PC-9 (cell line): ENCODE measurements at regions of chr6 and their contacts with region 1.

Region 1: GRCh38 chr6:158869826-158870648 is 50.9 kb upstream of the EZR start:
- DNase-seq: peak; percentile 87 to 99
- H3K4me3 ChIP-seq: peak overlapping the region; percentile 52
- H3K27ac ChIP-seq: peak overlapping the region; percentile 98
- H3K4me1 ChIP-seq: peaks cover 48% of the 10 kb centered on the region
- H3K27me3 ChIP-seq: no peaks in the 10 kb centered on the region
- CTCF ChIP-seq: peak; percentile 33; the same call in 1 of the 2 replicates

Region 2: DNA sequence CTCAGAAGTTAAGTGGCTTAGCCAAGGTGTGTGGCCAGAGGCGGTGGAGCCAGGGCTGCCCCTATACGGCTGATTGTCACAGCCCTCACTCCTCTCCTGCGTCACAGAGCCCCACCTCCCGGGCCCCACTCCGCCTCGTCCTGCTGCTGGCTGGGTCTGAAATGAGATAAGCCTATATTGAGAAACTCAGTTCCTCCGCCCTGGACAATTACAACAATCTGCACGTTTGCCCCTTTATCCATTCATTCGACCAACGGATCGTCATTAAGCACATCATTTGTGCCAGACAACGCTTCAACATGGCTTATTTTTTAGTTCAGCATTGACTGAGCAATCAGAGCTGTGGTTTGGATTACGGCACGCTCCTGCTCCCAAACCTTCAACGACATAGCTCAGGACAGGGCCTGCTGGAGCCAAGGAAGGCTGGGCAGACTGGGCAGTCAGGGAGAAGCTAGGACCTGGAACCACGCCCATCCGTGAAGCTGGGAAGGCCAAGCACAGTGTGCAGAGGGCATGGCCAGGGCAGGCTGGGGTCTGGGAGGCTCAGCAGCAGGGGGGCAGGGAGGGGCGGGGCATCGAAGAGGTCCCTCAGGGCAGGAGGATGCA is 34.3 kb before region 1 on chr6:
- CTCF ChIA-PET with region 1: no interaction called
- POLR2A ChIA-PET with region 1: interaction called, 16 read pairs
- intact Hi-C with region 1: no loop called
- DNase-seq: peak; percentile 80 to 94
- H3K4me3 ChIP-seq: peak overlapping the region; percentile 54
- H3K27ac ChIP-seq: peak overlapping the region; percentile 87
- H3K4me1 ChIP-seq: peaks cover 56% of the 10 kb centered on the region
- H3K27me3 ChIP-seq: no peaks in the 10 kb centered on the region
- CTCF ChIP-seq: no peak

Region 3: GRCh38 chr6:158847012-158847571 is 22.9 kb before region 1 on chr6:
- CTCF ChIA-PET with region 1: no interaction called
- POLR2A ChIA-PET with region 1: interaction called, 12 read pairs
- intact Hi-C with region 1: no loop called
- DNase-seq: no peak
- H3K4me3 ChIP-seq: no peak overlapping the region
- H3K27ac ChIP-seq: peak overlapping the region; percentile 99; the same call in 1 of the 2 replicates
- H3K4me1 ChIP-seq: peaks cover 51% of the 10 kb centered on the region
- H3K27me3 ChIP-seq: no peaks in the 10 kb centered on the region
- CTCF ChIP-seq: no peak

Region 4: GRCh38 chr6:158853072-158853871 is 16.8 kb before region 1 on chr6:
- CTCF ChIA-PET with region 1: interaction called, 7 read pairs
- POLR2A ChIA-PET with region 1: interaction called, 30 read pairs
- intact Hi-C with region 1: loop called (anchors 1 kb)
- DNase-seq: peak; percentile 92 to 100
- H3K4me3 ChIP-seq: peak overlapping the region; percentile 51
- H3K27ac ChIP-seq: peak overlapping the region; percentile 99
- H3K4me1 ChIP-seq: peaks cover 93% of the 10 kb centered on the region
- H3K27me3 ChIP-seq: no peaks in the 10 kb centered on the region
- CTCF ChIP-seq: no peak

Region 5: DNA sequence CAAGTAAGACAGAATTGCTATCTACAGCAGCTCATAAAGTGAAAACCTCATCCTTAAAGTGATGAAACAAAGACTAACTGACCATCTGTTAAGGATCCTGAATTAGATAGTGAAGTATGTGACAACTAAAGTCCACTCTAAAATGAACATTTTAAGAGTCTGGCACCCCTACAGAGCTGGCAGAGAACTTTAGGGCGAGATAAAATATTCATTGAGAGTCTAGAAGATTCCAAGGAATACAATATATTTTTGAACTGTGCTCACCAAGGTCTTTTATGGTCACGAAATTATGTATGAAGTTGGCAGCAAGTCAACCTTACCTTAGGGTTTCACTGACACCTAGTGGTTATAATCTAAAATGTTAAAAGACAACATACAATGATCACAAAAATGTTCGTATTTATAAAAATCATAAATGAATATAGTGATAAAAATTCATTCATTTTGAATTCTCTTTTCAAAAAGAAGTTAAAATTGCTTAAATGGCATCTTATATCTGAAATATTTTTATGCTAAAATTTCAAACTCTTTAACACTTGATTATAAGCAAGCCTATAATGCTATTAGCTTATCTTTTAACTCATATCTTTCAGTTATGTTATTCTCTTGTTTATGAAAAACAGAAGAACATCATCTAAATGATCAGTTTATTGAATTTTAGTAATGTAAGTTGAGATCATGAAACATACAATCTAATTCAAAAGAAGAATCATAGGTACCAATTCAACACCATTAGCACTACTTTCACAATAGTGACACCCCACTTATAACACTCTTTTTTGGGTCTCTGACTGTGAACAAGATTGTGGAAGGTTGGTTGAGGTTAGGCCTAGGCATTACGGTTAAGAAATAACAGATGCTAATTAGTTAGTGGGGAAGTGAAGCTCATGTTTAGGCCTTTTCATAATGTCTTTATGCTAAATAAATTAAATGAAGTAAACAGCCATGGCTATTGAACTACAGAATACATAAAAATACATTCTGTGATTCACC is 102.5 kb after region 1 on chr6:
- CTCF ChIA-PET with region 1: no interaction called
- POLR2A ChIA-PET with region 1: no interaction called
- intact Hi-C with region 1: loop called (anchors 1 kb)
- DNase-seq: peak; percentile 4 to 60
- H3K4me3 ChIP-seq: no peak overlapping the region
- H3K27ac ChIP-seq: peak overlapping the region; percentile 42
- H3K4me1 ChIP-seq: peaks cover 6% of the 10 kb centered on the region
- H3K27me3 ChIP-seq: no peaks in the 10 kb centered on the region
- CTCF ChIP-seq: peak; percentile 82

Region 6: DNA sequence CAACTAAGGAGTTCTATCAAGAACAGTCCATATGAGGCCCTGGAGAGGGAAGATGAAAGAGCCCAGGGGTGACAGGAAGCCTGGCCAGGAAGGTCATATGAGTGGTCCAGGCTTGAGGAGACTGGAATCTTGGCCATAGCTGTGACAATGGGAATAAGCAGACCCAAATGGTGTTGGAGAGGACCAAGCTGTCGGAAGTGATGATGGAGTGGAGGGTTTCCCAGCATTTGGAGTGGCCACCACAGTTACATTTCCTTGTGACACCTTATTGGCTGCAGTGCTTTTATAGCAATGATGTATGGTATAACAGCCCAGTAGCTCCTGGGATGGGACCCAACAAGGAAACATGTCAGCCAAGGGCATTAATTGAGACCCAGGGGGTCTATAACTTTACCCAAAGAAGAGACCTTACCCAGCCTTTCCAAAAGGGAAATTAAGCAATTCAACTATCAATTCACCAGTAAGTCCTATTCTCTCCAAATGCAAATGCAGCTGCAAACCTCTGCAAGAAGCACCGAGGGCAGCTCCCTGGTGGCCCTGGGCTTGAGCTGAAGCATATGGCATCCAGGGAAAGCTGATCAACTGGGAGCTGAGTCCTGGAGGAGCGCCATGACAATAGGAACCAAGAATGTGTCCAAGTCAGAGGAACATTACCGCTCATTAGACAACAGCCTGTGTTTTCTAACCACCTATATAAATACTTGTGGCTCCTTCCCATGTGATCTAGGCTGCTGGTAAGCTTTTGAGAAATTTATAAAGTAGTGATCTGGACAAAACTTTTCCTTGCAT is 603.6 kb after region 1 on chr6:
- CTCF ChIA-PET with region 1: no interaction called
- POLR2A ChIA-PET with region 1: no interaction called
- intact Hi-C with region 1: no loop called
- DNase-seq: no peak
- H3K4me3 ChIP-seq: no peak overlapping the region
- H3K27ac ChIP-seq: no peak overlapping the region
- H3K4me1 ChIP-seq: no peaks in the 10 kb centered on the region
- H3K27me3 ChIP-seq: no peaks in the 10 kb centered on the region
- CTCF ChIP-seq: no peak